Left colon (tissue), 2 donors: ENCODE measurements at regions of chr4 and their contacts with region 1.

Region 1: DNA sequence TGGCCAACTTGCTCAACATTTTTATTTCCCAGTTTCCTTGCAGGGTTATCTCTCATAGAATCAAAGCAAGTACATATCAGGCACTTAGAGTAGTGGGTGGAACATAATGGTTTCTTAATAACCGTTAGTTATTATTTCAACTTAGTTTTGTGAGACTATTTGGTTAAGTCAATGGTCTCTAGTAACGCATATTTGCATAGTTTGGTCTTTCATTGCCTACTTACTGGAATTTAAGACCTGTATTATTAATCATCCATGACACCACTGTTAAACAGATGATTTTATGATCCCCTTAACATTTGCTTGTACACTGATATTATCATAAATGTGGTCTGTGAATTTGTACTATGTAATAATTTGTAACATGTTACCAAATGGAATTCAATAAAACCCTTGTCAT is 70.9 kb upstream of the SMIM31 start:
- DNase-seq: no peak
- ATAC-seq: no peak

Region 2: GRCh38 chr4:163776957-163777356 is 906.1 kb before region 1 on chr4:
- intact Hi-C with region 1: loop called in 1 of 2 experiments (anchors 5 kb)
- DNase-seq: no peak
- ATAC-seq: no peak

Region 3: DNA sequence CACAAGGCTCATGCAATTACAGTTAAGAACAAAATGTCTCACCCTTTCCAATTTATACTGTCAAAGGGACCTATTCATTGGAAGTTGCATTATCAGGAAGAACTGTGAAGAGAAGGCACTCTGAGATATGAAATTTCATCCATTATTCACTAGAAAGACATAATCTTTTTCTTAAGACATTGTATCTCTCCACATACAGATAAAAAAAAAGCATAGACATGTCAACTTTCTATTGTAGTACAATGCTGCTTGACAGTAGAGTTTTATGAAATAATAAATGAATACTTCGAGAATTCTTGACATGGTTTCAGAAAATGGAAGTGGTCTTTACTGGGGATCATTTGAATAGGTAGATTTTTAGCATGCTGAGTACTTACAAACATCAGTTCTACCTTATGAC is 643.6 kb before region 1 on chr4:
- intact Hi-C with region 1: no loop called
- DNase-seq: no peak
- ATAC-seq: no peak

Region 4: GRCh38 chr4:165152527-165152926 is 469.5 kb after region 1 on chr4:
- intact Hi-C with region 1: no loop called
- DNase-seq: no peak
- ATAC-seq: no peak